BJ (cell line): ENCODE measurements at regions of chr15 and their contacts with region 1.

Region 1: GRCh38 chr15:65101411-65101890 is 13.5 kb downstream of the UBAP1L start:
- DNase-seq: no peak
- H3K4me3 ChIP-seq: no peak overlapping the region
- H3K27me3 ChIP-seq: no peaks in the 10 kb centered on the region
- CTCF ChIP-seq: peak; percentile 85

Region 2: GRCh38 chr15:64930778-64931371 is 170.6 kb before region 1 on chr15:
- CTCF ChIA-PET with region 1: no interaction called
- POLR2A ChIA-PET with region 1: no interaction called
- DNase-seq: no peak
- H3K4me3 ChIP-seq: no peak overlapping the region
- H3K27me3 ChIP-seq: no peaks in the 10 kb centered on the region
- CTCF ChIP-seq: no peak

Region 3: GRCh38 chr15:65049418-65049840 is 52.0 kb before region 1 on chr15:
- CTCF ChIA-PET with region 1: interaction called, 70 read pairs
- POLR2A ChIA-PET with region 1: no interaction called
- DNase-seq: peak; percentile 65
- H3K4me3 ChIP-seq: peak overlapping the region; percentile 17
- H3K27me3 ChIP-seq: no peaks in the 10 kb centered on the region
- CTCF ChIP-seq: no peak

Region 4: GRCh38 chr15:65060641-65061397 is 40.6 kb before region 1 on chr15:
- CTCF ChIA-PET with region 1: interaction called, 70 read pairs
- POLR2A ChIA-PET with region 1: no interaction called
- DNase-seq: no peak
- H3K4me3 ChIP-seq: no peak overlapping the region
- H3K27me3 ChIP-seq: peaks cover 22% of the 10 kb centered on the region
- CTCF ChIP-seq: no peak

Region 5: DNA sequence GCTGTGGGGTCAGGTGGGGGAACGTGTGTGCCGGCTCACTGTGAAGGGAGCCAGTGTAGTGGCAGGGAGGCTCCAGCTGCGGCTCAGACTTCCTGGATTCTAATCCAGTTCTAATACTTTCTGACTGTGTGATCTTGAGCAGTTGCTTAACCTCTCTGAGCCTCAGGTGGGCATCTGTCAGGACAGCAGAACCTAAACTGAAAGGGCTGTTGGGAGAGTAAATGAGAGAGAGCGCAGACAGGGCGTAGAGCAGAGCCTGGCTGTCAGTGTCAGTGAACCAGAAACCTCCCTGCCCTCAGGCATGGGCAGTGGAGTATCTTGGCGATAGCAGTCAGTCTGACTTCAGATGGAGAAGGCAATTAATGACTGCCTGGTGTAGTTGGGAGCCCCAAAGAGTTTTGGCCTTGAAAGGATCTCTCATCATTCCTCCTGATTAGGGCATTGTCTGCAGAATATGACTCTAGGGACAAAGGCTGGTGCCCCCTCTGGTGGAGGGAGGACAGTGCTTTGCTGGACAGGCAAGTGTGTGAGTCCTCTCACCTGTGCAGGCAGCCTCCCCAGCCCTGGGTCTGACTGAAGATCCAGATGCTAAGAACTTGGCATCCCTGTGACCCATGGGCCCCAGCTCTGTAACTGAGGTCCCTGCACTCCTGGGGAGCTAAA is 15.3 kb before region 1 on chr15:
- CTCF ChIA-PET with region 1: interaction called, 13 read pairs
- POLR2A ChIA-PET with region 1: interaction called, 3 read pairs
- DNase-seq: no peak
- H3K4me3 ChIP-seq: no peak overlapping the region
- H3K27me3 ChIP-seq: peaks cover 9% of the 10 kb centered on the region
- CTCF ChIP-seq: peak; percentile 55